A673 (cell line): ENCODE measurements at regions of chr9 and their contacts with region 1.

Region 1: DNA sequence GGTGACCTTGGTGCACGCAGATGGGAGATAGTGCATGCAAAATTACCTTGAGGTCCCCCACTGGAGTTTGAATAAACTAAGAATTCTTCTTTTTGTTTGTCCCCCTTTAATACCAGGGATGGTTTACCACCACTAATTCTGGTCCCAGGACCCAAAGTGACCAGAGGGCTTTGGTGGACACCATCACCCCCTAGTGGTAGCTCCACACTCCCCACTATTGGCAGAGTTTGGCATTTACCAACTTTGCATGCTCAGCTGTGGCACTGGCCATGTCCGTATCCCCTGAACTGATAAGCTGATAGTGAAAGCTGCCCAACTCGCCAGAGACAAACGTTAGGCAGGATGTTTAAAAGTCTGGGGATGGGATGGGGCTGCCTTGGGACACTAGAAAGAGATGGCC is 3.3 kb downstream of the ASTN2 start:
- DNase-seq: peak; percentile 38
- H3K4me3 ChIP-seq: no peak overlapping the region
- H3K27ac ChIP-seq: no peak overlapping the region
- H3K4me1 ChIP-seq: no peaks in the 10 kb centered on the region
- H3K27me3 ChIP-seq: peaks cover 77% of the 10 kb centered on the region
- CTCF ChIP-seq: peak; percentile 67

Region 2: GRCh38 chr9:117074784-117075520 is 336.6 kb before region 1 on chr9:
- CTCF ChIA-PET with region 1: no interaction called
- POLR2A ChIA-PET with region 1: no interaction called
- intact Hi-C with region 1: loop called (anchors 5 kb)
- DNase-seq: no peak
- H3K4me3 ChIP-seq: no peak overlapping the region
- H3K27ac ChIP-seq: no peak overlapping the region
- H3K4me1 ChIP-seq: no peaks in the 10 kb centered on the region
- H3K27me3 ChIP-seq: peaks cover 20% of the 10 kb centered on the region
- CTCF ChIP-seq: no peak

Region 3: DNA sequence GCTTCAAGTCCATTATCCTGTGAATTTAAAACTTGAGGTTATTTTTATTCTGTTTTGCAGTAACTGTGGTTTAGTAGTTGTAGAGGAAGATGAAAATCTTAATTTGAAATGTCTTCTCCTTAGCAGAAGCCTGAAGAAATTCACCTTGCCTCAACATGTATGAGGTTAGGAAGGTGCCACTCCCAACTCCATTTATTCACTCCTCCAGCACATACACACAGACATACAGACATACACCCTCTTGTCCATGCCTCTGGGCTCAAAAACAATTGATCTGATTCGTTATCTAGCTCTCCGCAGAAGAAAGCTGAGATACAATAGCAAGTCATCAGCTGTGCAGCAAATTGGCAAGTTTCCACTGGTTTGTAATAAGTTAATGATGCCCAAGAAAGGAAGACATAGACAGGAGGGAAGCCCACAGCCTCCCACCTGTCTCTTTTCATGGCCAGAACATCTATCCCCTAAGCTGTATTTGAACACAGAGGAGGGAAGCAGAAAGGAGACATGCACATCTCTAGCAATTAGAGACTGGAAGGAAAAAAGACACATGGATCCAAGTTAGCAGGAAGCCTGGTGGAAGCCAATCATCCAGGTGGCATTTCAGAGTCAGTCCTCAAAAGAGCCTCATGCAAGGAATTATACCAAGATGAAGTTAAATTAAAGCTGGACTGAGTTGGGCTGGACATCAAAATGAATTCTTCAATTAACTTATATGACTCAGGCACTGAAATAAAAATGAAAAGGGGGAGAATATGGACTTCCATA is 254.6 kb before region 1 on chr9:
- CTCF ChIA-PET with region 1: no interaction called
- POLR2A ChIA-PET with region 1: no interaction called
- intact Hi-C with region 1: loop called (anchors 5 kb)
- DNase-seq: no peak
- H3K4me3 ChIP-seq: no peak overlapping the region
- H3K27ac ChIP-seq: no peak overlapping the region
- H3K4me1 ChIP-seq: no peaks in the 10 kb centered on the region
- H3K27me3 ChIP-seq: peaks cover 19% of the 10 kb centered on the region
- CTCF ChIP-seq: no peak

Region 4: GRCh38 chr9:117169089-117169621 is 242.4 kb before region 1 on chr9:
- CTCF ChIA-PET with region 1: no interaction called
- POLR2A ChIA-PET with region 1: no interaction called
- intact Hi-C with region 1: no loop called
- DNase-seq: peak; percentile 66
- H3K4me3 ChIP-seq: peak overlapping the region; percentile 5
- H3K27ac ChIP-seq: no peak overlapping the region
- H3K4me1 ChIP-seq: peaks cover 2% of the 10 kb centered on the region
- H3K27me3 ChIP-seq: no peaks in the 10 kb centered on the region
- CTCF ChIP-seq: no peak

Region 5: DNA sequence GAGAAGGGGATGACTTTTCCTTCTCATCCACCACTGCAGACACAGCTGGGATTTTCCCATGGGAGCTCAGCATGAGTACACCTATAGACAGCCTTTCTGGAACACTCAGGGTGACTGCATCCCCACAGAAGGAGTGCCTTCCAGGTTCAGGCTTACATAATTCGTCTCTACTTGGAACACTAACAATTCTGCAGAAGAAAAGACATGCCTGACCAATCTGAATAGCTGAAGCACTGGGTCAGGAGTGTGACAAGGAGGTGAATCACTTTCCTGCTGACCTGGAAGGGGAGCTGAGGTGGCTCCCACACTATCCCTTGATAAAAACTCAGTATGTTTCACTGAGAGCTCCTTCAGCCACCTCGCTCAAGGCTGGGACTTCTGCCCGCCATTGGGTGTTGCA is 718.0 kb after region 1 on chr9:
- CTCF ChIA-PET with region 1: no interaction called
- POLR2A ChIA-PET with region 1: no interaction called
- intact Hi-C with region 1: no loop called
- DNase-seq: no peak
- H3K4me3 ChIP-seq: no peak overlapping the region
- H3K27ac ChIP-seq: no peak overlapping the region
- H3K4me1 ChIP-seq: no peaks in the 10 kb centered on the region
- H3K27me3 ChIP-seq: no peaks in the 10 kb centered on the region
- CTCF ChIP-seq: no peak